ENCODE measurements at regions of chr7 and their contacts with region 1.

Region 1: GRCh38 chr7:44999245-45000095 is 531 bp upstream of the CCM2 start:
- DNase-seq: peak; percentile 98 to 100 (median 99)
- ATAC-seq: peak; percentile 79
- H3K4me3 ChIP-seq: peak overlapping the region; percentile 69
- H3K4me3 Mint-ChIP-seq: peak overlapping the region; percentile 99
- H3K27ac ChIP-seq: peak overlapping the region; percentile 76 to 78
- H3K27ac Mint-ChIP-seq: peak overlapping the region; percentile 99
- H3K4me1 ChIP-seq: peaks cover 58% of the 10 kb centered on the region
- H3K4me1 Mint-ChIP-seq: peaks cover 52% of the 10 kb centered on the region
- H3K27me3 ChIP-seq: no peaks in the 10 kb centered on the region
- H3K27me3 Mint-ChIP-seq: no peaks in the 10 kb centered on the region
- CTCF ChIP-seq: no peak

Region 2: DNA sequence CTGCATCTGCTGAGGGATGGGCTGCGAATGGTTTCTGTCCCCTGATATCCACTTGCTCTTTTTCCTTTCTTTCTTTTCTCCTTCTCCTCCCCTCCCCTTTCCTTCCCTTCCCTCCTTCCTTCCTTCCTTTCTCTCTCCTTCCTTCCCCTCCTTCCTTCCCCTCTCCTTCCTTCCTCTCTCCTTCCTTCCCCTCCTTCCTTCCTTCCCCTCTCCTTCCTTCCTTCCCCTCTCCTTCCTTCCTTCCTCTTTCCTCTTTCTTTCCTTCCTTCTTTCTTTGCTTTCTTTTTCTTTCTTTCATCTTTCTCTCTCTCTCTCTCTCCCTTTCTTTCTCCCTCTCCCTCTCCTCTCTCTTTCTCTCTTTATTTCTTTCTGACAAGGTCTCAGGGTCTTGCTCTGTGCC is 1021.9 kb before region 1 on chr7:
- CTCF ChIA-PET with region 1: no interaction called
- POLR2A ChIA-PET with region 1: no interaction called
- intact Hi-C with region 1: no loop called
- DNase-seq: no peak
- ATAC-seq: no peak
- H3K4me3 ChIP-seq: no peak overlapping the region
- H3K4me3 Mint-ChIP-seq: no peak overlapping the region
- H3K27ac ChIP-seq: no peak overlapping the region
- H3K27ac Mint-ChIP-seq: no peak overlapping the region
- H3K4me1 ChIP-seq: no peaks in the 10 kb centered on the region
- H3K4me1 Mint-ChIP-seq: no peaks in the 10 kb centered on the region
- H3K27me3 ChIP-seq: no peaks in the 10 kb centered on the region
- H3K27me3 Mint-ChIP-seq: no peaks in the 10 kb centered on the region
- CTCF ChIP-seq: no peak

Region 3: GRCh38 chr7:44293561-44294324 is 705.7 kb before region 1 on chr7:
- CTCF ChIA-PET with region 1: no interaction called
- POLR2A ChIA-PET with region 1: no interaction called
- intact Hi-C with region 1: no loop called
- DNase-seq: peak in 2 of 14 experiments; percentile 2 to 3
- ATAC-seq: no peak
- H3K4me3 ChIP-seq: no peak overlapping the region
- H3K4me3 Mint-ChIP-seq: no peak overlapping the region
- H3K27ac ChIP-seq: no peak overlapping the region
- H3K27ac Mint-ChIP-seq: no peak overlapping the region
- H3K4me1 ChIP-seq: no peaks in the 10 kb centered on the region
- H3K4me1 Mint-ChIP-seq: no peaks in the 10 kb centered on the region
- H3K27me3 ChIP-seq: peaks cover 15 to 35% of the 10 kb centered on the region in 2 experiments
- H3K27me3 Mint-ChIP-seq: peaks cover 69% of the 10 kb centered on the region
- CTCF ChIP-seq: no peak

Region 4: GRCh38 chr7:44955733-44956132 is 43.7 kb before region 1 on chr7:
- CTCF ChIA-PET with region 1: no interaction called
- POLR2A ChIA-PET with region 1: no interaction called
- intact Hi-C with region 1: no loop called
- DNase-seq: no peak
- ATAC-seq: no peak
- H3K4me3 ChIP-seq: no peak overlapping the region
- H3K4me3 Mint-ChIP-seq: no peak overlapping the region
- H3K27ac ChIP-seq: no peak overlapping the region
- H3K27ac Mint-ChIP-seq: peak overlapping the region; percentile 55
- H3K4me1 ChIP-seq: peaks cover 19% of the 10 kb centered on the region
- H3K4me1 Mint-ChIP-seq: peaks cover 17% of the 10 kb centered on the region
- H3K27me3 ChIP-seq: no peaks in the 10 kb centered on the region
- H3K27me3 Mint-ChIP-seq: no peaks in the 10 kb centered on the region
- CTCF ChIP-seq: no peak

Region 5: DNA sequence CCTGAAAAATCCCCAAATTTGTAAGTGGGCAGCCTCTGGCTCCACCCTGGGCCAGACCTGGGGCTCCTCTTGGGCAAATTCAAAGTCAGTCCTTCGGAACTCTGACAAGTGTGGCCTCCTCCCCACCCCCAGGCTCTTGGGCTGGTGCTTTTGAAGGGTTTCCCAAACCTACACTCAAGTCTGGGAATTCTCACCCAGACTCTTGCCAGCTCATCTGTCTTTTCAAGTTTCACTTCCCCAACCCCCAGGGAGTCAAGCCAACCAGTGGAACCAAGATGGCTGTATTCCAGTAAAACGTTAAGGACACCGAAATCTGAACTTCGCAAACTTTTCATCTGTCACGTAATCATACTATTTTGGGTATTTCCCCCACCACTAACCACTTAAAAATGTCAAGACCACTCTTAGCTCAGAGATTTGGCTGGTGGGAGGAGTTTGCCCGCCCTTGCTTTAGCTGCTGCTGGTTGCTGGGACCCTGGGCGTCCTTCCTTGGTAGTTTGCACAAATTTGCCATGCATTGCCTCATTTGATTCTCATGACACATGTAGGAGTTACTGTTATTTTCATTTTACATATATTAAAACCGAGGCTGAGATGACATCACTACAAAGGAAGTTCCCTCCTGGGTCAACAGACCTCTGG is 19.0 kb before region 1 on chr7:
- CTCF ChIA-PET with region 1: interaction called, 7 read pairs
- POLR2A ChIA-PET with region 1: interaction called, 104 read pairs
- intact Hi-C with region 1: loop called in 1 of 2 experiments (anchors 1 kb)
- DNase-seq: peak in 6 of 14 experiments; percentile 45 to 91 (median 72)
- ATAC-seq: peak; percentile 19
- H3K4me3 ChIP-seq: no peak overlapping the region
- H3K4me3 Mint-ChIP-seq: peak overlapping the region; percentile 79
- H3K27ac ChIP-seq: peak overlapping the region; percentile 90 to 92
- H3K27ac Mint-ChIP-seq: peak overlapping the region; percentile 95
- H3K4me1 ChIP-seq: peaks cover 90% of the 10 kb centered on the region
- H3K4me1 Mint-ChIP-seq: peaks cover 90% of the 10 kb centered on the region
- H3K27me3 ChIP-seq: no peaks in the 10 kb centered on the region
- H3K27me3 Mint-ChIP-seq: no peaks in the 10 kb centered on the region
- CTCF ChIP-seq: no peak

Region 6: GRCh38 chr7:45013465-45013967 is 14.0 kb after region 1 on chr7:
- CTCF ChIA-PET with region 1: interaction called, 5 read pairs
- POLR2A ChIA-PET with region 1: interaction called, 15 read pairs
- intact Hi-C with region 1: no loop called
- DNase-seq: peak in 3 of 14 experiments; percentile 49 to 74 (median 59)
- ATAC-seq: peak; percentile 84
- H3K4me3 ChIP-seq: no peak overlapping the region
- H3K4me3 Mint-ChIP-seq: peak overlapping the region; percentile 7
- H3K27ac ChIP-seq: no peak overlapping the region
- H3K27ac Mint-ChIP-seq: peak overlapping the region; percentile 76
- H3K4me1 ChIP-seq: peaks cover 4% of the 10 kb centered on the region
- H3K4me1 Mint-ChIP-seq: peaks cover 41% of the 10 kb centered on the region
- H3K27me3 ChIP-seq: no peaks in the 10 kb centered on the region
- H3K27me3 Mint-ChIP-seq: no peaks in the 10 kb centered on the region
- CTCF ChIP-seq: no peak

Region 7: GRCh38 chr7:45026984-45027773 is 27.7 kb after region 1 on chr7:
- CTCF ChIA-PET with region 1: interaction called, 10 read pairs
- POLR2A ChIA-PET with region 1: interaction called, 367 read pairs
- intact Hi-C with region 1: loop called (anchors 1 to 2 kb)
- DNase-seq: peak in 11 of 14 experiments; percentile 13 to 82 (median 36)
- ATAC-seq: peak; percentile 57
- H3K4me3 ChIP-seq: peak overlapping the region; percentile 96
- H3K4me3 Mint-ChIP-seq: peak overlapping the region; percentile 94
- H3K27ac ChIP-seq: peak overlapping the region; percentile 82 to 83
- H3K27ac Mint-ChIP-seq: peak overlapping the region; percentile 95
- H3K4me1 ChIP-seq: peaks cover 56% of the 10 kb centered on the region
- H3K4me1 Mint-ChIP-seq: peaks cover 67% of the 10 kb centered on the region
- H3K27me3 ChIP-seq: no peaks in the 10 kb centered on the region
- H3K27me3 Mint-ChIP-seq: no peaks in the 10 kb centered on the region
- CTCF ChIP-seq: no peak